ENCODE measurements at regions of chr12 and their contacts with region 1.

Region 1: GRCh38 chr12:6607751-6608591 is 792 bp upstream of the CHD4 start:
- DNase-seq: peak in 8 of 9 experiments; percentile 38 to 92 (median 67)
- ATAC-seq: peak; percentile 45
- H3K4me3 ChIP-seq: no peak overlapping the region
- H3K4me3 Mint-ChIP-seq: no peak overlapping the region
- H3K27ac ChIP-seq: peak overlapping the region; percentile 76 to 96
- H3K27ac Mint-ChIP-seq: no peak overlapping the region
- H3K4me1 ChIP-seq: peaks cover 63% of the 10 kb centered on the region
- H3K4me1 Mint-ChIP-seq: peaks cover 48% of the 10 kb centered on the region
- H3K27me3 ChIP-seq: no peaks in the 10 kb centered on the region
- H3K27me3 Mint-ChIP-seq: no peaks in the 10 kb centered on the region
- CTCF ChIP-seq: no peak

Region 2: DNA sequence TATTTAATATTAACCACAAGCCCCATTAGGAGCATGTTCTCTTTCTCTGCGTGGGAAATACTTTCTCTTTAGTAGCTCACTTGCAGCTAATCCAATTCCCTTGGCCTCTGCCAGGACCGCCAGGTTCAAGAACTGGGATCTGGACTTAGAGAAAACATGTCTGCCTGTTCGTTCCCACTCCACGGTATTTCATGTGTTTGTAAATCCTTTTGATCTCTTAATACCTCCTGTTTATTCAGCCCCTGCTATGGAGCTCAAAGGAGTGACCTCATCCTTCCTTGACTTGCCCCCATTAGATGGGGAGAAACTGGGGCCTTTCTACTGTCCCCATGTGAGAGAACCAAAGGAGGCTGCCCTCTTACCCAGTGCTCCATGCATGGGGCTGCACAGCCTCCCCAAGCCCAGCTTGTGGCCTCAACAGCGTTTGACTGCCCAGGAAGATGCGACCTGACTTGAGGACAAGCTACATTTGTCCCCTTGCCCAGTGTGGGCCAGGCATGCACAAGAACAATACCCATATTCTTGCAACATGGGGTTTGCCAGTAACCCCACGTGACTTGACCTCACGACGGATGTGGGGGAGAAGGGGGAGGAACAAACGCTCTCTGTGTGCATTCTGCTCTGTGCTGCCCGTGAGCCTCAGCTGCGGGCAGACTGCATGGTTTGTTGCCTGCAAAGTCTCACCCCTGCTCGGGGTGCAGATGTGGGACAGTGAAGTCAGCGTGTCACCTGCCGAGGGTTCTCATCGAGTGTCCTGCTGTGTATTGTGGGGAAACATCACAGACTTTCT is 377.5 kb before region 1 on chr12:
- CTCF ChIA-PET with region 1: no interaction called
- POLR2A ChIA-PET with region 1: no interaction called
- intact Hi-C with region 1: no loop called
- DNase-seq: peak; percentile 53 to 91 (median 79)
- ATAC-seq: peak; percentile 96
- H3K4me3 ChIP-seq: no peak overlapping the region
- H3K4me3 Mint-ChIP-seq: peak overlapping the region; percentile 38
- H3K27ac ChIP-seq: peak overlapping the region; percentile 3 to 55
- H3K27ac Mint-ChIP-seq: peak overlapping the region; percentile 90
- H3K4me1 ChIP-seq: peaks cover 33% of the 10 kb centered on the region
- H3K4me1 Mint-ChIP-seq: peaks cover 34% of the 10 kb centered on the region
- H3K27me3 ChIP-seq: no peaks in the 10 kb centered on the region
- H3K27me3 Mint-ChIP-seq: no peaks in the 10 kb centered on the region
- CTCF ChIP-seq: no peak

Region 3: GRCh38 chr12:6335451-6336078 is 272.4 kb before region 1 on chr12:
- CTCF ChIA-PET with region 1: no interaction called
- POLR2A ChIA-PET with region 1: no interaction called
- intact Hi-C with region 1: loop called in 1 of 2 experiments (anchors 2 kb)
- DNase-seq: peak; percentile 68 to 95 (median 89)
- ATAC-seq: peak; percentile 68
- H3K4me3 ChIP-seq: peak overlapping the region; percentile 77 to 99
- H3K4me3 Mint-ChIP-seq: no peak overlapping the region
- H3K27ac ChIP-seq: peak overlapping the region; percentile 61 to 87
- H3K27ac Mint-ChIP-seq: no peak overlapping the region
- H3K4me1 ChIP-seq: peaks cover 82% of the 10 kb centered on the region
- H3K4me1 Mint-ChIP-seq: peaks cover 53% of the 10 kb centered on the region
- H3K27me3 ChIP-seq: no peaks in the 10 kb centered on the region
- H3K27me3 Mint-ChIP-seq: no peaks in the 10 kb centered on the region
- CTCF ChIP-seq: peak; percentile 71

Region 4: DNA sequence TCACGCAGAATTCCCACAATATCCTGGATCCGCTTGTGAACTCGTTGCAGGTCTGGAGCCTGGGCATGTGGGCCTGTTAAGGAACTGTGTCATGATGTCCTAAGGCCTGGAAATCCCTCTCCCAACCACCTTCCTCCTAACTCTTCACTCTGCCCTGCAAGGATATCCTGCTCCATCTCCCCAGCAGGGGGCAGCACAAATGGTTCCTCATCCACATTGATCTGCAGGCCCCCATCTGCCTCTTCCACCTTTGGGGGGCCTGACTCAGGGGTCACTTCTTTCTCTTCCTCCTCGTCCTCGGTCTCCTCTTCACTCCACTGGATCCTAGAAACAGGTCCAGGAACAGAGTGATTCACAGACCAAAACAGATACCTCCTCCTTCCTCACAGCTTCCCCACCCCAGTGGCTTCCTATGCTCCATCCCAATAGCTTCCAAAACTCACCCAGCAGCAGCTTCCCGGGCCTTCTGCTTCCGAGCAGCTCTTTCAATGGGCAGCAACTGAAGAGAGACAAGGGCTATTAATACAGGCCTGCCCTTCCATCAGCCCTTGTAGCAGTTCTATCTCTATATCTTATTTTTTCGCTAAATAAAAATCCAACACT is 44.4 kb before region 1 on chr12:
- CTCF ChIA-PET with region 1: interaction called, 9 read pairs
- POLR2A ChIA-PET with region 1: interaction called, 4 read pairs
- intact Hi-C with region 1: loop called (anchors 2 to 5 kb)
- DNase-seq: peak; percentile 39 to 82 (median 73)
- ATAC-seq: peak; percentile 27
- H3K4me3 ChIP-seq: no peak overlapping the region
- H3K4me3 Mint-ChIP-seq: no peak overlapping the region
- H3K27ac ChIP-seq: no peak overlapping the region
- H3K27ac Mint-ChIP-seq: peak overlapping the region; percentile 78
- H3K4me1 ChIP-seq: peaks cover 18% of the 10 kb centered on the region
- H3K4me1 Mint-ChIP-seq: peaks cover 42% of the 10 kb centered on the region
- H3K27me3 ChIP-seq: no peaks in the 10 kb centered on the region
- H3K27me3 Mint-ChIP-seq: no peaks in the 10 kb centered on the region
- CTCF ChIP-seq: peak; percentile 71

Region 5: GRCh38 chr12:6620137-6620884 is 12.3 kb after region 1 on chr12:
- CTCF ChIA-PET with region 1: interaction called, 4 read pairs
- POLR2A ChIA-PET with region 1: interaction called, 3 read pairs
- intact Hi-C with region 1: loop called in 1 of 2 experiments (anchors 1 kb)
- DNase-seq: peak in 7 of 9 experiments; percentile 21 to 78 (median 59)
- ATAC-seq: peak; percentile 72
- H3K4me3 ChIP-seq: peak overlapping the region; percentile 15 to 35
- H3K4me3 Mint-ChIP-seq: peak overlapping the region; percentile 73
- H3K27ac ChIP-seq: no peak overlapping the region
- H3K27ac Mint-ChIP-seq: peak overlapping the region; percentile 92
- H3K4me1 ChIP-seq: peaks cover 11% of the 10 kb centered on the region
- H3K4me1 Mint-ChIP-seq: peaks cover 39% of the 10 kb centered on the region
- H3K27me3 ChIP-seq: no peaks in the 10 kb centered on the region
- H3K27me3 Mint-ChIP-seq: no peaks in the 10 kb centered on the region
- CTCF ChIP-seq: peak; percentile 69

Region 6: GRCh38 chr12:6662906-6663742 is 55.2 kb after region 1 on chr12 and contains the start of gene ING4:
- CTCF ChIA-PET with region 1: no interaction called
- POLR2A ChIA-PET with region 1: interaction called, 3 read pairs
- intact Hi-C with region 1: loop called (anchors 1 to 2 kb)
- DNase-seq: peak; percentile 91 to 100 (median 95)
- ATAC-seq: peak; percentile 97
- H3K4me3 ChIP-seq: peak within 1 kb of the TSS; percentile 81 to 92
- H3K4me3 Mint-ChIP-seq: peak within 1 kb of the TSS; percentile 96
- H3K27ac ChIP-seq: peak within 1 kb of the TSS; percentile 87 to 91
- H3K27ac Mint-ChIP-seq: peak within 1 kb of the TSS; percentile 97
- H3K4me1 ChIP-seq: peaks cover 20% of the 10 kb centered on the region
- H3K4me1 Mint-ChIP-seq: peaks cover 38% of the 10 kb centered on the region
- H3K27me3 ChIP-seq: no peaks in the 10 kb centered on the region
- H3K27me3 Mint-ChIP-seq: no peaks in the 10 kb centered on the region
- CTCF ChIP-seq: no peak
- total RNA-seq, gene ING4: 14.1 to 15.9 TPM

Region 7: GRCh38 chr12:6825398-6826124 is 217.6 kb after region 1 on chr12:
- CTCF ChIA-PET with region 1: no interaction called
- POLR2A ChIA-PET with region 1: no interaction called
- intact Hi-C with region 1: loop called in 1 of 2 experiments (anchors 5 kb)
- DNase-seq: peak; percentile 59 to 86 (median 79)
- ATAC-seq: peak; percentile 63
- H3K4me3 ChIP-seq: no peak overlapping the region
- H3K4me3 Mint-ChIP-seq: peak overlapping the region; percentile 5
- H3K27ac ChIP-seq: no peak overlapping the region
- H3K27ac Mint-ChIP-seq: no peak overlapping the region
- H3K4me1 ChIP-seq: peaks cover 13% of the 10 kb centered on the region
- H3K4me1 Mint-ChIP-seq: peaks cover 32% of the 10 kb centered on the region
- H3K27me3 ChIP-seq: peaks cover 10 to 45% of the 10 kb centered on the region in 2 experiments
- H3K27me3 Mint-ChIP-seq: peaks cover 48% of the 10 kb centered on the region
- CTCF ChIP-seq: peak; percentile 71